Activated CD4-positive, alpha-beta T cell treated with anti-CD3 and anti-CD28 coated beads, Interleukin-2, amount 10 ng/mL, durations not matched to agents 24 days and 14 days (primary cell): ENCODE measurements at regions of chr20 and their contacts with region 1.

Region 1: GRCh38 chr20:45752746-45753145 is 30.6 kb downstream of the SPINT4 start:
- DNase-seq: no peak
- H3K4me3 Mint-ChIP-seq: peak overlapping the region; percentile 39
- H3K27ac Mint-ChIP-seq: peak overlapping the region; percentile 84
- H3K4me1 Mint-ChIP-seq: peaks cover 15% of the 10 kb centered on the region
- H3K27me3 Mint-ChIP-seq: peaks cover 22% of the 10 kb centered on the region

Region 2: DNA sequence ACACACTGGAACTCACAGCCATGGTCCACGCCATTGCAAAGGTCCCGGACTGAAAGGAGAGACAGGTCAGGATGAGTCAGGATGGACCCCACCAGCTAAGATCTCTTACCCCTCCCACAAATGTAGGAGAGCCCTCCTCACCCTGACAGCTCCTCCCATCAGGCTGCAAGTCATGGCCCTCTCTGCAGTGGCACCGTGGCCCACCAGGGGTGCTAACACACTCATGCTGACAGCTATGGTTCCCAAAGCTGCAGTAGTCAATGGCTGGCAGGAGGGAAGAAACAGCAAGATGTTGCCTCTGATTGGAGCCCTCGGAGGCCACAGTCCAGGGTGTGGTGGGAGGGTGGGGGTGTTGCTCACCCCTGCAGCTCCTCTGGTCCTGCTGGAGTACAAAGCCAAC is 451.8 kb before region 1 on chr20:
- intact Hi-C with region 1: loop called (anchors 5 kb)
- DNase-seq: peak; percentile 80
- H3K4me3 Mint-ChIP-seq: no peak overlapping the region
- H3K27ac Mint-ChIP-seq: no peak overlapping the region
- H3K4me1 Mint-ChIP-seq: peaks cover 34% of the 10 kb centered on the region
- H3K27me3 Mint-ChIP-seq: peaks cover 14% of the 10 kb centered on the region

Region 3: DNA sequence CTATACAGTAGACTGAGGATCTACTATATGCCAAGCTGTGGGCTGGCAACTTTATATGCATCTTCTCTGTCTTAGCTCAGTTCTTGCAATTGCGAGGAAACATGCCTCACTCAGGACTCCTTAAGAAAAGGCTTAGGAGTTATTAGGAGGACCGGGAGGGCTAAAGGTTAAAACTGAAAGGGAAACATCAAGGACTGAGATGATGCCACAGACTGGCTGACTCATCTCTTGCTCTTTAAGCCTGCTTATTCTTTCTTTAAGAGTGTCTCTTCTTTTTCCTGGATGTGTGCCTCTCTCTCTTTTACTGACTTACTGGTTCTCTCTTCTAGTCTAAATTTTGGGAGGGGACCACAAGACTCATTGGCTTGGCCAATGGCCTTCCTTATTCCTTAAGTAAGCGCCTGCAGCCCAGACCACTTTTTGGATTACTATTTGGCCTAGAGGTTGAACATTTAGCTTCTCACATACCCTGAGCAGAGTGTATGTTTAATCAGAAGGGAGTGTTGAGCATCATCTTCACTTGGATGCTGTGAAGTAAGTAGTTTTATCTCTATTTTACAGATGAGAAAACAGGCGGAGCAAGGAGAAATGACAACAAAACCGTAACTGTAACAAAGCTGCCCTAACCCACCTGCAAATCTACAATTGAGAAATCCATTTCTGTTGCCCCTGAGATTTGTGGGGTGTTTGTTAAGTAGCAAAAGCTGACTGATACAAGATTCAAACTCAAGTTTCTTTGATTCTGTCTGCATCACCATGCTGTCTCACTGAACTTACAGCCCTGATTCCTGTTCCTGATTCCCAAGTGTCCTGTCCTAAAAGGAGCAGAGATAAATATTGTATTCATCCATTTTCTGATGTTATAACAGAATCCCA is 397.3 kb before region 1 on chr20:
- intact Hi-C with region 1: loop called (anchors 2 kb)
- DNase-seq: peak; percentile 76
- H3K4me3 Mint-ChIP-seq: peak overlapping the region; percentile 82
- H3K27ac Mint-ChIP-seq: peak overlapping the region; percentile 96
- H3K4me1 Mint-ChIP-seq: peaks cover 57% of the 10 kb centered on the region
- H3K27me3 Mint-ChIP-seq: no peaks in the 10 kb centered on the region

Region 4: DNA sequence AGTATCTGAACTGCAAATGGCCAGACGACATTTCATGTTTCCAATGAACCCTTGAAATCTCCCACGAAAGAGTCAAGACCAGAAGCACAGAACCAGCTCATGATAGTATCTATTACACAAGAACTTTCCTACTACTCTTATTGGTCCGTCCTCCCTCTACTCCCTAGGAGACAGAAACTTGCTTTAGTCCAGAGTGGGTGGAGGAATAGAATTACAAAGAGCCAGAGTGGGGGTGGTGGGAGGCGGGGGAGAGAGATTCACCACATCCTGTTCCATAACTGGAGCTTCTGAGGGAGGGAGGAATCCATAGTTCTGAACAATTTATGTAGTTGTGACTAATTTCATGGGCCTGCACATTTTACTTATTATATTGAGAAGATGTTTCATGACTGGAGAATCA is 141.7 kb before region 1 on chr20:
- intact Hi-C with region 1: loop called (anchors 1 kb)
- DNase-seq: peak; percentile 54
- H3K4me3 Mint-ChIP-seq: no peak overlapping the region
- H3K27ac Mint-ChIP-seq: peak overlapping the region; percentile 3
- H3K4me1 Mint-ChIP-seq: peaks cover 16% of the 10 kb centered on the region
- H3K27me3 Mint-ChIP-seq: peaks cover 5% of the 10 kb centered on the region